Uterus (tissue), 4 donors: ENCODE measurements at regions of chr3 and their contacts with region 1.

Region 1: GRCh38 chr3:184262764-184263179 is 1.4 kb upstream of the CAMK2N2 start:
- DNase-seq: no peak
- H3K4me3 ChIP-seq: no peak overlapping the region
- H3K27ac ChIP-seq: no peak overlapping the region
- H3K4me1 ChIP-seq: peaks cover 0 to 24% of the 10 kb centered on the region in 2 donors
- H3K27me3 ChIP-seq: peaks cover 27% of the 10 kb centered on the region in 2 donors
- CTCF ChIP-seq: no peak
- POLR2A ChIP-seq: no peak

Region 2: GRCh38 chr3:184290331-184290730 is 27.6 kb after region 1 on chr3:
- intact Hi-C with region 1: loop called (anchors 1 kb)
- DNase-seq: no peak
- H3K4me3 ChIP-seq: no peak overlapping the region
- H3K27ac ChIP-seq: no peak overlapping the region
- H3K4me1 ChIP-seq: no peaks in the 10 kb centered on the region
- H3K27me3 ChIP-seq: peaks cover 0 to 4% of the 10 kb centered on the region in 2 donors
- CTCF ChIP-seq: no peak
- POLR2A ChIP-seq: no peak